Activated B cell treated with CpG ODN at 0.5 μM for 24 hours (primary cell): ENCODE measurements at regions of chr22 and their contacts with region 1.

Region 1: GRCh38 chr22:44180706-44181032 is at the start of gene PARVG:
- DNase-seq: no peak
- ATAC-seq: peak; percentile 63
- H3K4me3 Mint-ChIP-seq: peak within 1 kb of the TSS; percentile 90
- H3K27ac Mint-ChIP-seq: peak within 1 kb of the TSS; percentile 95
- H3K4me1 Mint-ChIP-seq: peaks cover 40% of the 10 kb centered on the region
- H3K27me3 Mint-ChIP-seq: no peaks in the 10 kb centered on the region
- CTCF ChIP-seq: no peak
- total RNA-seq, gene PARVG: 91.6 and 96.1 TPM in 2 replicates

Region 2: DNA sequence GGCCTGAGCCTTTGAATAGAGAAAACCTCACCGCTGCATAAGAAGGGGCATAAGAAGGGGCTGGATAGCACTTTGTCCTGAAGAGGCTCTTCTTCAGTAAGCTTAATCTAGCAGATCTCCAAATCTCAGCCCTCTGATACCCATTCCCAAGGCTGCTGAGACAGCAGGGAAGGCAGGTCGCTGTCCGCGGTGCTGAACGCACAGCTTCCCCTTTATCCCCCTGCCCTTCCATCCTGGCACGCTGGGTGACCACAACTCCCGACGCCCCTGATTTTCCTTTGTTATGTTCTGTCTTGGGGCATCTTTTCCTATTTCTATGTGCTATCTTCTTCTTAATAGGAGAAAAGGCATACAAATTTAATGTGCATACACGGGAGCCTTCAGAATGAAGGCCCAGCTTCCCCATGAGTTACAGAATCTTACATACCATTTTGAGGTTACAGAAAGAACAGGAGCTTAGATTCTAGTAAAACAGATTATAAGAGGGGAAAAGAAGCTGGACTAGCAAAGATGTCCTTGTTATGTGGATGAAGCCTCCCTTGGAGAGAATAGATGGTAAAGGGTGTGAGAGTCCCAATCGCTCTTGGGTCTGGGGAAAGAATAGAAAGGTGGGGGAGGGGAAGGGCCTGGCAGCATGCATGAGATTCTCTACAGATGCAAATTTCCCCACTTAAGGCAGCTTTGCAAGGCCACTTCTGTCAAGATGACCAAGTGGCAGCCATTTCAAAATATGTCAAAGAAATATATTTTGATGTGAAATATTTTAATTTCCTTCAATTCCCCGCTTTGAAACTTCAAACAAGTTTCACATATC is 312.6 kb before region 1 on chr22:
- CTCF ChIA-PET with region 1: no interaction called
- POLR2A ChIA-PET with region 1: no interaction called
- intact Hi-C with region 1: no loop called
- DNase-seq: no peak
- ATAC-seq: no peak
- H3K4me3 Mint-ChIP-seq: no peak overlapping the region
- H3K27ac Mint-ChIP-seq: peak overlapping the region; percentile 8
- H3K4me1 Mint-ChIP-seq: no peaks in the 10 kb centered on the region
- H3K27me3 Mint-ChIP-seq: peaks cover 13% of the 10 kb centered on the region
- CTCF ChIP-seq: no peak

Region 3: DNA sequence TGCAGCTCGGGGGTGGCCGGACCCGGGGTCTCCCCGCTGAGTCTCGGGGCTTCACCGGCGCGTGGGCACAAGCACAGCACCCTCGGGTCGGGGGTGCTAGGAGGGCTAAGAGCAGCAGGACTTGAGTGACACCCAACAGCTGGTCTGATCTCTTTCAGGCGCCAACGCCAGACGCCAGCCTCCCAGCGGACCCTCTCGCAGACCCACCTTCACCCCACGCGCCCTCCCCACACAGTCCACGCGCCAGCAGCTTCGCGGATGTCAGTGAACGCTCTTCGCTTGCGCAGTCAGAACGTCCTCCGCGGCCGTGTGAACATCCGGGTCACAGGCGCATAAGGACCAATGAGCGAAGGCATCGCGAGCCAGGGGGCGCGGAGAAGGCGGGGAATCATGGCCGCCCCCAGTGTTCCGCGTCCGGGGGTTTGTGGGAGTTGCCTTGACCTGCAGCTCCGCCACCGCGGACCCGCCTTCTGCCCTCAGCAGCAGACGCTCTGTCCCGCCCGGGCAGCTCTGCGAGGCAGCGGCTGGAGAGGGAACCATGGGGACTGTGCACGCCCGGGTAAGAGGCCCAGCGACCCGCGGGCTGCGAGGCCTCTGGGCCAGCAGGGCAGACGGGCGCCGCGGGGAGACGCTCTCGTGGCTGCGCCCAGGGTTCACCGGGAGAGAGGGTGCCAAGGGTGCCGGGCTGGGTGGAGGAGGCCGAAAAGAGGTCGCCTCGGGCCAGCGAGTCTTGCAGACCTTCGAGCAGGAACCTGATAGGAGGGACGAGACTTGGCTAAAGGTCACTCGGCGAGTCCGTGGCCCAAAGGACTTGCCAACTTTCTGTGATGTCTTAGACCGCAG is 225.4 kb before region 1 on chr22 and contains the start of gene SAMM50:
- CTCF ChIA-PET with region 1: no interaction called
- POLR2A ChIA-PET with region 1: interaction called, 6 read pairs
- intact Hi-C with region 1: loop called (anchors 5 kb)
- DNase-seq: peak; percentile 86
- ATAC-seq: peak; percentile 95
- H3K4me3 Mint-ChIP-seq: peak within 1 kb of the TSS; percentile 96
- H3K27ac Mint-ChIP-seq: peak within 1 kb of the TSS; percentile 94
- H3K4me1 Mint-ChIP-seq: peaks cover 33% of the 10 kb centered on the region
- H3K27me3 Mint-ChIP-seq: peaks cover 3% of the 10 kb centered on the region
- CTCF ChIP-seq: no peak
- total RNA-seq, gene SAMM50: 49.6 and 51.2 TPM in 2 replicates

Region 4: GRCh38 chr22:44026630-44027511 is 153.8 kb before region 1 on chr22:
- CTCF ChIA-PET with region 1: no interaction called
- POLR2A ChIA-PET with region 1: interaction called, 21 read pairs
- intact Hi-C with region 1: loop called (anchors 2 kb)
- DNase-seq: peak; percentile 79
- ATAC-seq: peak; percentile 55
- H3K4me3 Mint-ChIP-seq: peak overlapping the region; percentile 83
- H3K27ac Mint-ChIP-seq: peak overlapping the region; percentile 100
- H3K4me1 Mint-ChIP-seq: peaks cover 82% of the 10 kb centered on the region
- H3K27me3 Mint-ChIP-seq: no peaks in the 10 kb centered on the region
- CTCF ChIP-seq: no peak

Region 5: DNA sequence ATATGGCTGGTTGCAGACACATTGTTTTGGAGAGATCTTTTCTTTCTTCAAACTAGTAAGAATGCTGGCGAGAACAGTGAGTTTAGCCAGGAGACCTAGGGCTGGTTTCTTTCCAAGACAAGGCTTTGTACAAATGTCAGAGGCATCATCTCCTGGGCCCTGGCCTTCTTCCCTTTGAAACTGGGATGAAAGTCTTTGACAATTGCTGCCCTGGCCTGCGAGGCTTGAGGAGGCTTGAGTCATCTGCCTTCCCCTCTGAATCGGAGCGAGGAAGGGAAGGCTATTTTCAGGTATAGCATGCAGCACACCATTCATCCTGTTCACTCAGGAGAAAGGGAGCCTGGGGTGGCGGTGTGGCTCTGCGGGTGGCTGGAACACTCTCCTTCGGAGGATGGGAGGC is 21.4 kb before region 1 on chr22:
- CTCF ChIA-PET with region 1: no interaction called
- POLR2A ChIA-PET with region 1: no interaction called
- intact Hi-C with region 1: no loop called
- DNase-seq: no peak
- ATAC-seq: no peak
- H3K4me3 Mint-ChIP-seq: no peak overlapping the region
- H3K27ac Mint-ChIP-seq: no peak overlapping the region
- H3K4me1 Mint-ChIP-seq: no peaks in the 10 kb centered on the region
- H3K27me3 Mint-ChIP-seq: no peaks in the 10 kb centered on the region
- CTCF ChIP-seq: no peak

Region 6: GRCh38 chr22:44192098-44192810 is 11.6 kb after region 1 on chr22:
- CTCF ChIA-PET with region 1: interaction called, 6 read pairs
- POLR2A ChIA-PET with region 1: interaction called, 53 read pairs
- intact Hi-C with region 1: loop called (anchors 1 kb)
- DNase-seq: no peak
- ATAC-seq: no peak
- H3K4me3 Mint-ChIP-seq: no peak overlapping the region
- H3K27ac Mint-ChIP-seq: no peak overlapping the region
- H3K4me1 Mint-ChIP-seq: peaks cover 59% of the 10 kb centered on the region
- H3K27me3 Mint-ChIP-seq: no peaks in the 10 kb centered on the region
- CTCF ChIP-seq: no peak

Region 7: GRCh38 chr22:44329179-44329796 is 148.6 kb after region 1 on chr22:
- CTCF ChIA-PET with region 1: no interaction called
- POLR2A ChIA-PET with region 1: interaction called, 3 read pairs
- intact Hi-C with region 1: loop called (anchors 10 kb)
- DNase-seq: no peak
- ATAC-seq: peak; percentile 66
- H3K4me3 Mint-ChIP-seq: no peak overlapping the region
- H3K27ac Mint-ChIP-seq: no peak overlapping the region
- H3K4me1 Mint-ChIP-seq: peaks cover 28% of the 10 kb centered on the region
- H3K27me3 Mint-ChIP-seq: peaks cover 51% of the 10 kb centered on the region
- CTCF ChIP-seq: no peak

Region 8: DNA sequence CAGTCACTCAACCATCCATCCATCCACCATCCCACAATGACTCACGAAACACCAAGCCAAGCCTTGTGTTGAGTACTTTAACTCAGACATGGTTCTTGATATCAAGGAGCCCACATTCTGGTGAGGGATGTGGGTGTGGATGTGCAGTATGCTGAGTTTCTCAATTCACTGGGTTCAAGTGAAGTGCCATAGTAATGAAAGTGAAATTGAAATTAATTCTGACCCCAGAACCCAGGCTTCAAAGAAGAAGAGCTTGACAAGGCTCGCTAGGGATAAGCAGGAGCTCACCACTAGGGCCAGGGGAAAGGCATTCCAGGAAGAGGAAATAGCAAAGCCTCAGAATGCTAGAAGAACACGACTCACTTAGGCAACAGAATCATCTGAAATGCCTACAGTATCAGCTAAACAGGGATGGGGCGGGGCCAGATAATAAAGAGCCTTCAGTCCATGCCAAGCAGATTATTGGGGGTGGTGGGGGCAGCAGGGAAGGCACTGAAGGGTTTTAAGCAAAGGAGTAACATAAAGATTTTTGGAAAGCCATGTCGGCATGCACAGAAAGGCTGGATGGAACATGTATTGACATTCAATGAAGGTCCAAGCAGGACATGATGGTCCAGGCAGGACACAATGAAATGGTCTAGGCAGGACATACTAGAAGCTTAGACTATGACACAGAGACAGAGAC is 280.2 kb after region 1 on chr22:
- CTCF ChIA-PET with region 1: no interaction called
- POLR2A ChIA-PET with region 1: no interaction called
- intact Hi-C with region 1: no loop called
- DNase-seq: no peak
- ATAC-seq: no peak
- H3K4me3 Mint-ChIP-seq: no peak overlapping the region
- H3K27ac Mint-ChIP-seq: no peak overlapping the region
- H3K4me1 Mint-ChIP-seq: peaks cover 2% of the 10 kb centered on the region
- H3K27me3 Mint-ChIP-seq: peaks cover 10% of the 10 kb centered on the region
- CTCF ChIP-seq: no peak

Region 9: DNA sequence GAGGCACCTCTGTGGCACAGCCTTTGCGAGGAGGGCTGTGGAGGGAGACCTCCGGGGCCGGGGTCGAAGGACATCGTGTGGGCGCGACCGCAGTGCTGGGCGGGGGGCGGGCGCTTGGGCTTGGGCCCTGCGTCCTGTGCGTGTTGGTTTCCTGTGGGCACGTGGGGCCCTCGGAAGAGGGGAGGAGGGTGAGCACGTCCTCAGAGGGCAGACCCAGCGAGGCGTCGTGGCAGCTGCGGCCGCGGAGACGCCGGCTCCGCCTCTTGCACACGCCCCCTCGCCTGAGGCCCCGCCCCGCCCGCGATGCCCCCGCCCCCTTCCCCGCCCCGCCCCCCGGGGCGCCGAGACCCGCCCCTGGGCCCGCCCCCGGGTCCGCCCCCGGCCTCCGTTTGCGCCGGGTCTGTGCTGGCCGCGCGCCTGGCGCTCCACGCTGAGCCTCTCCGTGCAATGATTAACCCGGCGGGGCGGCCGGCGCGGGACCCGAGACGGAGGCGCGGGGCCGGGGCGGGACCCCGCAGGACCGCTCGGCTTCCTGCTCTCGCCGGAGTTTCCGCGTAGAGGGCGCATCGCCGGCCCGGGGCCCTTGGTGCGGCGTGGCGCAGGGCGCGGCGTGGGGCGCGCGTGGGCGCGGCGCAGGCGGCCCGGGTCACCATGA is 521.3 kb after region 1 on chr22 and contains the start of gene PRR5:
- CTCF ChIA-PET with region 1: no interaction called
- POLR2A ChIA-PET with region 1: no interaction called
- intact Hi-C with region 1: loop called (anchors 10 kb)
- DNase-seq: peak; percentile 73
- ATAC-seq: peak; percentile 93
- H3K4me3 Mint-ChIP-seq: peak within 1 kb of the TSS; percentile 75
- H3K27ac Mint-ChIP-seq: peak within 1 kb of the TSS; percentile 66
- H3K4me1 Mint-ChIP-seq: peaks cover 20% of the 10 kb centered on the region
- H3K27me3 Mint-ChIP-seq: no peaks in the 10 kb centered on the region
- CTCF ChIP-seq: no peak
- total RNA-seq, gene PRR5: 15.5 and 18.0 TPM in 2 replicates